IMR-90 (cell line): ENCODE measurements at regions of chr5 and their contacts with region 1.

Region 1: GRCh38 chr5:102583276-102584124 is 84.7 kb upstream of the SLCO6A1 start:
- DNase-seq: peak; percentile 18
- ATAC-seq: no peak
- H3K4me3 ChIP-seq: no peak overlapping the region
- H3K27ac ChIP-seq: no peak overlapping the region
- H3K4me1 ChIP-seq: no peaks in the 10 kb centered on the region
- H3K27me3 ChIP-seq: no peaks in the 10 kb centered on the region; the same call in 1 of the 2 replicates
- CTCF ChIP-seq: peak; percentile 50
- POLR2A ChIP-seq: no peak
- RAD21 ChIP-seq: peak; percentile 38

Region 2: GRCh38 chr5:102087906-102088305 is 495.6 kb before region 1 on chr5:
- CTCF ChIA-PET with region 1: no interaction called
- POLR2A ChIA-PET with region 1: no interaction called
- dilution Hi-C with region 1: no loop called
- in situ Hi-C with region 1: no loop called
- intact Hi-C with region 1: no loop called
- DNase-seq: no peak
- ATAC-seq: no peak
- H3K4me3 ChIP-seq: no peak overlapping the region
- H3K27ac ChIP-seq: no peak overlapping the region
- H3K4me1 ChIP-seq: no peaks in the 10 kb centered on the region
- H3K27me3 ChIP-seq: no peaks in the 10 kb centered on the region
- CTCF ChIP-seq: no peak
- POLR2A ChIP-seq: no peak
- RAD21 ChIP-seq: no peak

Region 3: GRCh38 chr5:102792705-102793104 is 209.2 kb after region 1 on chr5:
- CTCF ChIA-PET with region 1: no interaction called
- POLR2A ChIA-PET with region 1: no interaction called
- dilution Hi-C with region 1: no loop called
- in situ Hi-C with region 1: no loop called
- intact Hi-C with region 1: loop called (anchors 5 kb)
- DNase-seq: no peak
- ATAC-seq: peak; percentile 63; the same call in 1 of the 2 replicates
- H3K4me3 ChIP-seq: no peak overlapping the region
- H3K27ac ChIP-seq: no peak overlapping the region
- H3K4me1 ChIP-seq: peaks cover 2% of the 10 kb centered on the region
- H3K27me3 ChIP-seq: no peaks in the 10 kb centered on the region
- CTCF ChIP-seq: peak; percentile 35
- POLR2A ChIP-seq: no peak
- RAD21 ChIP-seq: peak; percentile 37; the same call in 1 of the 2 replicates

Region 4: GRCh38 chr5:103041071-103041676 is 457.7 kb after region 1 on chr5:
- CTCF ChIA-PET with region 1: interaction called, 3 read pairs
- POLR2A ChIA-PET with region 1: no interaction called
- dilution Hi-C with region 1: no loop called
- in situ Hi-C with region 1: loop called (anchors 5 kb)
- intact Hi-C with region 1: loop called (anchors 1 kb)
- DNase-seq: peak; percentile 65
- ATAC-seq: peak; percentile 54; the same call in 1 of the 2 replicates
- H3K4me3 ChIP-seq: no peak overlapping the region
- H3K27ac ChIP-seq: no peak overlapping the region
- H3K4me1 ChIP-seq: no peaks in the 10 kb centered on the region
- H3K27me3 ChIP-seq: no peaks in the 10 kb centered on the region
- CTCF ChIP-seq: peak; percentile 71
- POLR2A ChIP-seq: no peak
- RAD21 ChIP-seq: peak; percentile 83

Region 5: DNA sequence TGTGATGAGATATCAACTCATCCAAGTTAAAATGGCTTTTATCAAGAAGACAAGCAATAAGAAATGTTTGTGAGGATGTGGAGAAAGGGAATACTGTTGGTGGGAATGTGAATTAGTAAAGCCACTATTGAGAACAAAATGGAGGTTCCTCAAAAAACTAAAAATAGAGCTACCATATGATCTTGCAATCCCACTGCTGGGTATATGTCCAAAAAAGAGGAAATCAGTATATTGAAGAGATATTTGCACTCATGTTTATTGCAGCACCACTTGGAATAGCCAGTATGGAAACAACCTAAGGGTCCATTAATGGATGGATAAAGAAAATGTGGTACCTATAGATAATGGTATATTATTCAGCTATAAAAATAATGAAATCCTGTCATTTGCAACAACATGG is 561.7 kb after region 1 on chr5:
- CTCF ChIA-PET with region 1: no interaction called
- POLR2A ChIA-PET with region 1: no interaction called
- dilution Hi-C with region 1: no loop called
- in situ Hi-C with region 1: loop called (anchors 10 kb)
- intact Hi-C with region 1: no loop called
- DNase-seq: no peak
- ATAC-seq: no peak
- H3K4me3 ChIP-seq: no peak overlapping the region
- H3K27ac ChIP-seq: no peak overlapping the region
- H3K4me1 ChIP-seq: no peaks in the 10 kb centered on the region
- H3K27me3 ChIP-seq: no peaks in the 10 kb centered on the region
- CTCF ChIP-seq: no peak
- POLR2A ChIP-seq: no peak
- RAD21 ChIP-seq: no peak

Region 6: DNA sequence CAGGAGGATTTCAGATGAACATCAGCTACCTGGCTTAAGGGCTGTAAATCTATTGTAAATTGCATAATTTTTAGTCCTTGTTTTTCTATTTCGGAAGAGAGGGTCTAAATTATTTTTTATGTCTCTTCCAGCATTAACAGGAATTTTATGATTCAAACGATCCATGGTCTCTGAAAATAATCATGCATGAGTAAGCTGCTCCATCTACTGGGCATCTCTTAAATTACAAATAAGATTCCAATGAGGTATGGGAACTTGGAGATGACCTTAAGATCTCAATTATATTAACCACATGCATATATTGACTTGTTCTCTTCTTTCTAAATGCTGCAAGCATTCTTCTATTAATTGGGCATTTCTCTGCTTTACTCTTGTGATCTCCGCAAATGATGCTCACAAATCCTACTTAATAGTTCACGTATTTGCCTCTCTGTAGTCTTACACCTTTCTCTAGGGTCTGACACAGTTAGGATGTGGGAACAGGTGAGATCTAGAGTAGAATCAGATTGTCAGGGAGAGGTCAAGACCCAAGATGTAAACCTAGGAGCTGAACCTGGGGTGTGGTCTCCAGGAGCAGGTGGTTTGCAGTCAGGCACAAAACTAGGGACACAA is 892.2 kb after region 1 on chr5:
- CTCF ChIA-PET with region 1: no interaction called
- POLR2A ChIA-PET with region 1: no interaction called
- dilution Hi-C with region 1: no loop called
- in situ Hi-C with region 1: loop called (anchors 25 kb)
- intact Hi-C with region 1: no loop called
- DNase-seq: peak; percentile 60
- ATAC-seq: peak; percentile 85
- H3K4me3 ChIP-seq: no peak overlapping the region
- H3K27ac ChIP-seq: no peak overlapping the region
- H3K4me1 ChIP-seq: no peaks in the 10 kb centered on the region
- H3K27me3 ChIP-seq: peaks cover under 1% of the 10 kb centered on the region
- CTCF ChIP-seq: peak; percentile 85
- POLR2A ChIP-seq: no peak
- RAD21 ChIP-seq: peak; percentile 94